CD4-positive, alpha-beta memory T cell (primary cell): ENCODE measurements at regions of chr14 and their contacts with region 1.

Region 1: DNA sequence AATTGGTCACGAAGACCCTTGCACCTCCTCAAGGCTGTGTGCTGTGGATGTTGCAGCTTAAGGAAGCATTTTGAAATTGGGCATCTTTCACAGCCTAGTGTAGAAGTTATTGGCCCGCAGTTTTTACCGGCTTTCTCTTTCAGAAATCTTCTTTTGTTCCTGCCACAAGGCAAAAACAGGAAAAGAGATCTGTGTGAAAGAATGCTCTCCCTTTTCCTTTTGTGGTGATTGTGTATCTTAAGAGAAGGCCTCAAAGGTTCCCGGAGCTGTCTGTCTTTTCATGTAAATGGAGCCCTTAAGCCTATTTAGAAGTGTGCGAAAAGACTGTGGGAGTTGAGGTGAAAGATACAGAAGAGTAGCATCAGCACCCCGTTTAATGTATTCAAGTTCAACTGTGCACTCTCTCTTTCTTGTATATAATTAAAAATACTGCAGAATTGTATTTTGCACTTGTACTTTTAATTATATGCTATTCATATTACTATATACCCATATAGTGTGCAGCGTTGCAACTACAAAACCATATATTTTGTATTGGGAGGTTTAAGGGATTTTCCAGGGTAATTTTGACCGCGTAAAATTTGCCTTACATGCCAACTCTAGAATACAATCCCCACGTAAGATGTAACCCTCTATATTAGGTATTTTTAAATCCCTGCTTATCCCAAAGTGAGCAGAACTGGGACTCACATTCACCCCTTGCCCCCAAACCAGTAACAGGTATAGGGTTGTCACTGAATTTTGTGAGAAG is 441.7 kb downstream of the RAD51B start:
- DNase-seq: no peak
- H3K4me3 ChIP-seq: peak overlapping the region in 1 of 2 donors; percentile 10
- H3K4me3 Mint-ChIP-seq: peak overlapping the region; percentile 46 to 82 (median 64)
- H3K27ac ChIP-seq: peak overlapping the region; percentile 37
- H3K27ac Mint-ChIP-seq: peak overlapping the region; percentile 87 to 96 (median 93)
- H3K4me1 ChIP-seq: peaks cover 49% of the 10 kb centered on the region
- H3K4me1 Mint-ChIP-seq: peaks cover 26 to 57% (median 46%) of the 10 kb centered on the region in 4 donors
- H3K27me3 ChIP-seq: no peaks in the 10 kb centered on the region
- H3K27me3 Mint-ChIP-seq: no peaks in the 10 kb centered on the region

Region 2: DNA sequence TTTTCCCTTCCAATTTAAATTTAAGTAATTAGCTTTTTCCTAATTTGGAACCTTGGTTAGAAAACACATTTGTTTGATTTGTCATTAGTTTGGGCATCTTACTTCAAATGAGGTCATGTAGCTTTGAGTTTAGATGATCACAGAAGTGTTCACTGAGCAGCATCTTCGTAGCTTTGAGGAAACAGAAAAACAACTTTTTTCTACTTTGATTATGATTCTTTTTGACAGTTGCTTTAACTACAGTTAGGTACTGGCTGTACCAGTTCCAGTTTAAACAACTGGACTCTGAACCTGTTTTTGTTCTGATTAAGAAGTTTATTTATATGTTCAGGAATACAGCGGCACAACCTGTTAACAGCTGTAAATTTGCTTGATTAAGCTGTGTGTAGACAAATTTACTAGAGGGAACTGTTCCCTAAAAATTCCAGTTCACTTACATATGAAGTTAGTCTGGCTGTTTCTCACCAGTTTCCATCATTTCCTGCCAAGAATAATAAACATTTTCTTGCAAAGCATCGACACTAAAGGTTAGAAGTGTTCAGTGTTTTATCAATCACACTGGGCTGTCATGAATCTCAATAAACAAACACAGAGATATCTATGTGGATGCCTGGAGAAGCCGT is 249.8 kb before region 1 on chr14:
- CTCF ChIA-PET with region 1: no interaction called
- POLR2A ChIA-PET with region 1: no interaction called
- intact Hi-C with region 1: no loop called
- DNase-seq: no peak
- H3K4me3 ChIP-seq: no peak overlapping the region
- H3K4me3 Mint-ChIP-seq: no peak overlapping the region
- H3K27ac ChIP-seq: no peak overlapping the region
- H3K27ac Mint-ChIP-seq: no peak overlapping the region
- H3K4me1 ChIP-seq: no peaks in the 10 kb centered on the region
- H3K4me1 Mint-ChIP-seq: no peaks in the 10 kb centered on the region
- H3K27me3 ChIP-seq: no peaks in the 10 kb centered on the region
- H3K27me3 Mint-ChIP-seq: no peaks in the 10 kb centered on the region

Region 3: DNA sequence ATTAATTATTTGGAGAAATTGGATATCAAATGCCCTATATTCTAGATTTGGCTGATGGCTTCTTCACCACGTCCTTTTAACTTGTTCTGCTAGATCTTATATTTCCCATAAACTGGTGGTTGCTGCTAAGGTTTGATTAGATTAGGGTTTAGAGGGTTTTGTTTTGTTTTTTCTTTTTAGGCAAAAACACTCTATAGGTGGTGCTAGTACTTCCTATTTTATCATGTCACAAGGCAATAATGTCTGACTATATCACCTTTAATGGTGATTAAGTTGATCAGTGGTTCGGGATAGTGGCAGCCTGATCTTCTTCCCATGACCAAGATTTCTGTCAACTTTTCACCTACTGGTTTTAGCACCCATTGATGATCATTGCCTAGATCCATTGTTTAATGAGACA is 13.5 kb after region 1 on chr14:
- CTCF ChIA-PET with region 1: interaction called, 10 read pairs
- POLR2A ChIA-PET with region 1: interaction called, 8 read pairs
- intact Hi-C with region 1: no loop called
- DNase-seq: no peak
- H3K4me3 ChIP-seq: no peak overlapping the region
- H3K4me3 Mint-ChIP-seq: peak overlapping the region in 3 of 8 donors; percentile 6 to 15 (median 9)
- H3K27ac ChIP-seq: no peak overlapping the region
- H3K27ac Mint-ChIP-seq: peak overlapping the region in 5 of 7 donors; percentile 24 to 77 (median 44)
- H3K4me1 ChIP-seq: peaks cover 30% of the 10 kb centered on the region
- H3K4me1 Mint-ChIP-seq: peaks cover 22 to 53% (median 30%) of the 10 kb centered on the region in 4 donors
- H3K27me3 ChIP-seq: no peaks in the 10 kb centered on the region
- H3K27me3 Mint-ChIP-seq: no peaks in the 10 kb centered on the region